ENCODE measurements at regions of chr11 and their contacts with region 1.

Region 1: GRCh38 chr11:8682303-8683114 is at the starts of genes RPL27A and TRIM66:
- DNase-seq: peak; percentile 82 to 94
- H3K4me3 ChIP-seq: peak within 1 kb of the TSS; percentile 99
- H3K27ac ChIP-seq: peak within 1 kb of the TSS; percentile 89
- H3K4me1 ChIP-seq: peaks cover 34% of the 10 kb centered on the region
- H3K27me3 ChIP-seq: no peaks in the 10 kb centered on the region
- CTCF ChIP-seq: no peak
- total RNA-seq, gene RPL27A: 548 and 560 TPM in 2 replicates
- total RNA-seq, gene TRIM66: 16.1 and 17.0 TPM in 2 replicates

Region 2: GRCh38 chr11:8247312-8247711 is 435.2 kb before region 1 on chr11:
- CTCF ChIA-PET with region 1: interaction called, 10 read pairs
- POLR2A ChIA-PET with region 1: no interaction called
- intact Hi-C with region 1: no loop called
- DNase-seq: peak in 1 of 2 experiments; percentile 34
- H3K4me3 ChIP-seq: no peak overlapping the region
- H3K27ac ChIP-seq: no peak overlapping the region
- H3K4me1 ChIP-seq: peaks cover 4% of the 10 kb centered on the region; the same call in 1 of the 2 replicates
- H3K27me3 ChIP-seq: no peaks in the 10 kb centered on the region
- CTCF ChIP-seq: peak; percentile 75

Region 3: DNA sequence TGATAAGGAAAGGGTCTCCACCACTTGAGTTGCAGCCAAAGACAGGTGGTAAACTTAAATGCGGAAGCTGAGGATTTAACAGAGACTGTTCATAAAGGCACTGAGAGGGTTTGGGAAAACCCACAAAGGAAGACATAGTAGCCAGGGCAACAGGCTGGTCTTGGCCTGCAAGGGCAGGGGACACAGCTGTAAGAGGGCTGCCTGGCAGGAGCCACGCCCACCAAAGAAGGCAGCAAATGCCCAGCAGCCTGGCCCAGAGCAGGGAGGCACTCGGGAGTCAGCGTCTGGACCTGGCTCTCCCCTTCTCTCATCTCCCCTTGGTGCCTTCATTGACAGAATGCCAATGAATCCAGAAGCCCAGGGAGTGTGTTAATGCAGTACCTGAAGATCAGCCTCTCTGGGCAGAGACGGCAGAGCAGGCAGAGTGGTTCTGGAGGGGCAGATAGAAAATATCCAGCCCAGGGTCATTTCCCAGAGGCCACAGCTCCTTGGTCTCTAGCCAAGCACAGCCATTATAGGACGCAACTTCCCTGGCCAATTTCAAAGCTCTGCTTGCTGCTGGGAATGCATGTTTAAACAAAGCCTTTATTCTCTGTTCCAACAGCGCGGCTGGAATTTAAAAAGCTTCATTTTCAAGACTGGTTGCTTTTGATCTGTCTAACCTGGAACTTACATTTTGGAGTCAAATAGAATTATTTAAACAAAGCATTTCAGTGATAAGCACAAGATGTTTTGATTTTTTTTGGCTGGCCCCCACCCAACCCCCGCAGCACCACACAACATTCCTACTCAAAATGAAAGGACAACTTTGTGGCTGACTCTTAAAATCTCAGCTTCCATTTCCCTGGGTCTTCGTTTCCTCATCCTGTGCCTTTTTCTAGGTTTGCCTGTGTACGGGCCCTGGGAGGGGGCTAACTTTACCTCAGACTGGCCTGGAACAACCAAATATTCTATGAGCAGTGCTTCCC is 293.2 kb before region 1 on chr11:
- CTCF ChIA-PET with region 1: no interaction called
- POLR2A ChIA-PET with region 1: interaction called, 10 read pairs
- intact Hi-C with region 1: no loop called
- DNase-seq: no peak
- H3K4me3 ChIP-seq: no peak overlapping the region
- H3K27ac ChIP-seq: no peak overlapping the region
- H3K4me1 ChIP-seq: no peaks in the 10 kb centered on the region
- H3K27me3 ChIP-seq: no peaks in the 10 kb centered on the region
- CTCF ChIP-seq: no peak

Region 4: DNA sequence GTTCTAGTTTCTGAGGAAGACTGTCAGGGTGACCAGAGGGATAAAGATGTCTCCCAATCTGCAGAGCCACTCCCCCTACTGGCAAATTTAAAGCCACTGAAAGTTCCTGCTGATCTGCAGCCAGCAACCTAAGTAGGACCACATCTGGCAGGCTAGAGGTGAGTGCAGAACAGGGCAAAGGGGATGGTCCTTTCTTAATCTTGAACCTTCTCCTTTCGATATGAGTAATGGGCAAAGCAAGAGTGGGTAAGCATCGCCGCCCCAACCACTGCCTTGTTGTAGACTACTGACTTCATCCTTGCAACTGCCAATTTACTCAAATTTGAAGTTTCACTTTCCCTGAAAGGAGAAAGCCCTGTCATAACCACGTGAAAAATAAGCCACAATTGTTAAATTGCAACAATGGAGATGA is 378.2 kb after region 1 on chr11:
- CTCF ChIA-PET with region 1: no interaction called
- POLR2A ChIA-PET with region 1: no interaction called
- intact Hi-C with region 1: no loop called
- DNase-seq: no peak
- H3K4me3 ChIP-seq: no peak overlapping the region
- H3K27ac ChIP-seq: no peak overlapping the region
- H3K4me1 ChIP-seq: no peaks in the 10 kb centered on the region
- H3K27me3 ChIP-seq: no peaks in the 10 kb centered on the region
- CTCF ChIP-seq: no peak; the same call in 1 of the 2 replicates